Endothelial cell of umbilical vein (primary cell): ENCODE measurements at regions of chr12 and their contacts with region 1.

Region 1: GRCh38 chr12:26884765-26885576 is 52.0 kb upstream of the ITPR2 start:
- DNase-seq: peak; percentile 83
- H3K4me3 ChIP-seq: no peak overlapping the region
- H3K27ac ChIP-seq: no peak overlapping the region
- H3K4me1 ChIP-seq: peaks cover 2% of the 10 kb centered on the region
- H3K27me3 ChIP-seq: no peaks in the 10 kb centered on the region
- CTCF ChIP-seq: peak; percentile 88 to 90
- POLR2A ChIP-seq: no peak

Region 2: DNA sequence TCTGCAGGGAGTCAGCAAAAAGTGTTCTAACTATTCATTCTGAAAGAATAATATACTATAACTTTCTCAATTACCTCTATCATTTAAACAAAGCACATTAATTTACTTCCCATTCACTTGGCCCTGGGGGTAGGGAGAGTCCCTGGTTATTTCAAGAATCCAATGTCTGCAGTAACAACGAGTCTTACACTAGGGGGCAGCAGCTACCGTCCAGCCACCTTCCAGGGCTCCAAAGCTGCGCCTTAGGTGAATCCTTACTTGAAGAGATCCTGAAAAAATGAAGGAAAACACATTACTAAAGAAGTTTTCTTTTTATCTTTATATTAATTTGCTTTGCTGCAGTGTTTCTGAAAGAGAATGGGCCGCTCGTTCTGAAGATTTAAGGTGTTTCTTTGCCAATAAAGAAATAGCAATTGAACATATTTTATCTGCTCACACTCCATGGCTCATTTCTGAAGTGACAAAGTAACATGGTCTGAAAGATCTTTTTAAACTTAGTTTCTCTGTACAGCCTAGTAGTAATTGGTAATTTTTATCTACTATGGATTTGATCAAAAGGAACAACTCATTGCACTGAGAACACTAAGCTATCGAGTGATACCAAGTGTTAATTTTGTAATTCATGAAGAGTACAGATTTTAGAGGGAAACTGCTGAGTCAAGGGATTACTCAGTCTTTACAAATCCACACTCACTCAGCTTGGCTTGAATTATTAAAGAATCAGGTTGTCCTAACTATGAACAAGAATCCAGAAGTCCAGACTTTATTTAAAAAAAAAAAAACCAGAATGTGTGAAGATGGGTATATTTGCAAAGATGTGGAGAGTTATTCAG is 787.7 kb before region 1 on chr12:
- CTCF ChIA-PET with region 1: interaction called, 3 read pairs
- POLR2A ChIA-PET with region 1: no interaction called
- dilution Hi-C with region 1: no loop called
- intact Hi-C with region 1: loop called (anchors 1 kb)
- DNase-seq: peak; percentile 76
- H3K4me3 ChIP-seq: no peak overlapping the region
- H3K27ac ChIP-seq: no peak overlapping the region
- H3K4me1 ChIP-seq: no peaks in the 10 kb centered on the region
- H3K27me3 ChIP-seq: no peaks in the 10 kb centered on the region
- CTCF ChIP-seq: peak; percentile 88 to 89
- POLR2A ChIP-seq: no peak

Region 3: GRCh38 chr12:26629864-26630263 is 255.1 kb before region 1 on chr12:
- CTCF ChIA-PET with region 1: interaction called, 15 read pairs
- POLR2A ChIA-PET with region 1: no interaction called
- dilution Hi-C with region 1: no loop called
- intact Hi-C with region 1: no loop called
- DNase-seq: peak; percentile 61
- H3K4me3 ChIP-seq: peak overlapping the region in 1 of 3 experiments; percentile 31
- H3K27ac ChIP-seq: peak overlapping the region; percentile 78
- H3K4me1 ChIP-seq: peaks cover 32% of the 10 kb centered on the region
- H3K27me3 ChIP-seq: no peaks in the 10 kb centered on the region
- CTCF ChIP-seq: peak; percentile 27 to 32
- POLR2A ChIP-seq: no peak

Region 4: GRCh38 chr12:26810330-26810729 is 74.6 kb before region 1 on chr12:
- CTCF ChIA-PET with region 1: no interaction called
- POLR2A ChIA-PET with region 1: no interaction called
- dilution Hi-C with region 1: no loop called
- intact Hi-C with region 1: no loop called
- DNase-seq: peak; percentile 75
- H3K4me3 ChIP-seq: no peak overlapping the region
- H3K27ac ChIP-seq: no peak overlapping the region
- H3K4me1 ChIP-seq: no peaks in the 10 kb centered on the region
- H3K27me3 ChIP-seq: no peaks in the 10 kb centered on the region
- CTCF ChIP-seq: no peak
- POLR2A ChIP-seq: no peak

Region 5: GRCh38 chr12:26845057-26845666 is 39.8 kb before region 1 on chr12:
- CTCF ChIA-PET with region 1: interaction called, 57 read pairs
- POLR2A ChIA-PET with region 1: no interaction called
- dilution Hi-C with region 1: no loop called
- intact Hi-C with region 1: no loop called
- DNase-seq: peak; percentile 65
- H3K4me3 ChIP-seq: no peak overlapping the region
- H3K27ac ChIP-seq: no peak overlapping the region
- H3K4me1 ChIP-seq: peaks cover 15% of the 10 kb centered on the region
- H3K27me3 ChIP-seq: no peaks in the 10 kb centered on the region
- CTCF ChIP-seq: peak; percentile 65 to 66
- POLR2A ChIP-seq: no peak

Region 6: GRCh38 chr12:26870491-26871419 is 14.2 kb before region 1 on chr12:
- CTCF ChIA-PET with region 1: interaction called, 68 read pairs
- POLR2A ChIA-PET with region 1: no interaction called
- dilution Hi-C with region 1: no loop called
- intact Hi-C with region 1: no loop called
- DNase-seq: peak; percentile 96
- H3K4me3 ChIP-seq: no peak overlapping the region
- H3K27ac ChIP-seq: peak overlapping the region; percentile 47
- H3K4me1 ChIP-seq: peaks cover 16% of the 10 kb centered on the region
- H3K27me3 ChIP-seq: no peaks in the 10 kb centered on the region
- CTCF ChIP-seq: no peak
- POLR2A ChIP-seq: no peak

Region 7: GRCh38 chr12:27498149-27498548 is 613.2 kb after region 1 on chr12:
- CTCF ChIA-PET with region 1: no interaction called
- POLR2A ChIA-PET with region 1: no interaction called
- dilution Hi-C with region 1: no loop called
- intact Hi-C with region 1: no loop called
- DNase-seq: no peak
- H3K4me3 ChIP-seq: no peak overlapping the region
- H3K27ac ChIP-seq: no peak overlapping the region
- H3K4me1 ChIP-seq: no peaks in the 10 kb centered on the region
- H3K27me3 ChIP-seq: no peaks in the 10 kb centered on the region
- CTCF ChIP-seq: no peak
- POLR2A ChIP-seq: no peak